ENCODE measurements at regions of chr15 and their contacts with region 1.

Region 1: GRCh38 chr15:95479308-95479707 is 851.2 kb upstream of the NR2F2 start:
- DNase-seq: no peak
- ATAC-seq: no peak
- H3K4me3 ChIP-seq: no peak overlapping the region
- H3K27ac ChIP-seq: no peak overlapping the region
- H3K4me1 ChIP-seq: no peaks in the 10 kb centered on the region
- H3K27me3 ChIP-seq: no peaks in the 10 kb centered on the region
- CTCF ChIP-seq: no peak
- POLR2A ChIP-seq: no peak

Region 2: DNA sequence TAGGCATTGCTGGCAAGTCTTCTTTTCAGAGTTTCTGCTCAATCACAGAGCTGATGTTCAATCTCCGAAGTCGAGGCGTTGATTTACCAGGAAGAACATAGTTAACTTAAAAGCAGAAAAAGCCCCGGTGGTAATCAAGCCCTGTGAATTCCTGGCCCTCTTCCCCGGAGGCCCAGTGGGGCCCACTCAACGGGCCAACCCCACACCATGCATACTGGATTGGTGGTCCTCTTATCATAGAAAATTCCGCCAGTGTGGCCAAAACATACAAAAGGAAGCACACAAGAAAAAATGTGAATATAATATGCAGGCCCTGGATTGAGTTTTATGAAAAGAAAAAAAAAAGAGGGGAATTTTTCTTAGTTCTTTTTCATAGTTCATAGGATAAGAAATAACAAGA is 21.8 kb before region 1 on chr15:
- in situ Hi-C with region 1: no loop called
- intact Hi-C with region 1: loop called (anchors 1 kb)
- DNase-seq: no peak
- ATAC-seq: no peak
- H3K4me3 ChIP-seq: no peak overlapping the region
- H3K27ac ChIP-seq: peak overlapping the region in 2 of 4 donors; percentile 24 to 44
- H3K4me1 ChIP-seq: peaks cover 0 to 5% of the 10 kb centered on the region in 2 donors
- H3K27me3 ChIP-seq: no peaks in the 10 kb centered on the region
- CTCF ChIP-seq: no peak
- POLR2A ChIP-seq: no peak

Region 3: GRCh38 chr15:95944226-95944625 is 464.9 kb after region 1 on chr15:
- in situ Hi-C with region 1: no loop called
- intact Hi-C with region 1: no loop called
- DNase-seq: no peak
- ATAC-seq: no peak
- H3K4me3 ChIP-seq: no peak overlapping the region
- H3K27ac ChIP-seq: no peak overlapping the region
- H3K4me1 ChIP-seq: no peaks in the 10 kb centered on the region
- H3K27me3 ChIP-seq: no peaks in the 10 kb centered on the region
- CTCF ChIP-seq: no peak
- POLR2A ChIP-seq: no peak

Measured in gastrocnemius medialis (tissue), 4 donors.